ENCODE measurements at regions of chr7 and their contacts with region 1.

Region 1: DNA sequence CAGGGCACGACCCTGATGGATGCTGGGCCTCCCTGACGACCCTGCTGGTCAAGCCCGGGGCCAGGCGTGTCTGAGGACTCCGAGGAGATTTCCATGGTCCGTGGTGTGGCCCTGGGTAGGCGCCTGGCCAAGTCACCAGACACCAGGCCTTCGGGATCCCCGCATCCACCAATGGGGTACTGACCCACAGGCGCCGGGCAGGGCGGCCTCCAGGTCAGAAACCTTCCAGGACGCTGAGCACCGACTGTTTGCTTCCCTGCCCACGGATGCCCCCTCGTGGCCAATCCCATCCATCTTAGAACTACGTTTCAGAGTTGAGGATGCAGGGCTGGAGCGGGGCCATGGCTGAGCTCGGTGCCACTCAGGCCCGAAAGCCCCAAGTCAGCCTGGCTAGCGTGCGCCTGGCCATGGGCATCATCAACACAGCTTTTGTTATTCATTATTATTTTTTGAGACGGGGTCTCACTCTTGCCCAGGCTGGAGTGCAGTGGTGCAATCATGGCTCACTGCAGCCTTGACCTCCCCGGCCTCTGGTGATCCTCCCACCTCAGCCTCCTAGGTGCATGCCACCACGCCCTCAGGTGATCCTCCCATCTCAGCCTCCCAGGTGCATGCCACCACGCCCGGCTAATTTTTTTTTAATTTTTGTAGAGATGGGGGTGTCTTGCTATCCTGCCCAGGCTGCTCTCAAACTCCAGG is 7.1 kb upstream of the AMZ1 start:
- DNase-seq: peak; percentile 85 to 88
- ATAC-seq: peak; percentile 65 to 92 (median 88)
- H3K4me3 ChIP-seq: no peak overlapping the region
- H3K27ac ChIP-seq: no peak overlapping the region
- H3K4me1 ChIP-seq: peaks cover 0 to 5% (median 3%) of the 10 kb centered on the region in 9 donors
- H3K27me3 ChIP-seq: peaks cover 0 to 37% (median 21%) of the 10 kb centered on the region in 7 donors
- CTCF ChIP-seq: peak; percentile 70 to 85 (median 80)

Region 2: GRCh38 chr7:2403014-2403717 is 277.8 kb before region 1 on chr7 and contains the start of gene CHST12:
- intact Hi-C with region 1: no loop called
- DNase-seq: peak; percentile 94 to 96
- ATAC-seq: peak; percentile 86 to 92 (median 89)
- H3K4me3 ChIP-seq: peak within 1 kb of the TSS; percentile 87 to 100 (median 96)
- H3K27ac ChIP-seq: peak within 1 kb of the TSS; percentile 52 to 91 (median 88)
- H3K4me1 ChIP-seq: peaks cover 6 to 76% (median 58%) of the 10 kb centered on the region in 9 donors
- H3K27me3 ChIP-seq: no peaks in the 10 kb centered on the region
- CTCF ChIP-seq: no peak
- total RNA-seq, gene CHST12: 12.4 to 17.2 (median 14.0) TPM

Region 3: GRCh38 chr7:2444476-2444875 is 236.5 kb before region 1 on chr7:
- intact Hi-C with region 1: loop called in 1 of 10 experiments (anchors 10 kb)
- DNase-seq: peak in 1 of 2 donors; percentile 24
- ATAC-seq: peak in 7 of 8 donors; percentile 46 to 77 (median 50)
- H3K4me3 ChIP-seq: no peak overlapping the region
- H3K27ac ChIP-seq: peak overlapping the region in 6 of 10 donors; percentile 10 to 48 (median 29)
- H3K4me1 ChIP-seq: peaks cover 0 to 13% (median 0%) of the 10 kb centered on the region in 9 donors
- H3K27me3 ChIP-seq: no peaks in the 10 kb centered on the region
- CTCF ChIP-seq: no peak

Region 4: DNA sequence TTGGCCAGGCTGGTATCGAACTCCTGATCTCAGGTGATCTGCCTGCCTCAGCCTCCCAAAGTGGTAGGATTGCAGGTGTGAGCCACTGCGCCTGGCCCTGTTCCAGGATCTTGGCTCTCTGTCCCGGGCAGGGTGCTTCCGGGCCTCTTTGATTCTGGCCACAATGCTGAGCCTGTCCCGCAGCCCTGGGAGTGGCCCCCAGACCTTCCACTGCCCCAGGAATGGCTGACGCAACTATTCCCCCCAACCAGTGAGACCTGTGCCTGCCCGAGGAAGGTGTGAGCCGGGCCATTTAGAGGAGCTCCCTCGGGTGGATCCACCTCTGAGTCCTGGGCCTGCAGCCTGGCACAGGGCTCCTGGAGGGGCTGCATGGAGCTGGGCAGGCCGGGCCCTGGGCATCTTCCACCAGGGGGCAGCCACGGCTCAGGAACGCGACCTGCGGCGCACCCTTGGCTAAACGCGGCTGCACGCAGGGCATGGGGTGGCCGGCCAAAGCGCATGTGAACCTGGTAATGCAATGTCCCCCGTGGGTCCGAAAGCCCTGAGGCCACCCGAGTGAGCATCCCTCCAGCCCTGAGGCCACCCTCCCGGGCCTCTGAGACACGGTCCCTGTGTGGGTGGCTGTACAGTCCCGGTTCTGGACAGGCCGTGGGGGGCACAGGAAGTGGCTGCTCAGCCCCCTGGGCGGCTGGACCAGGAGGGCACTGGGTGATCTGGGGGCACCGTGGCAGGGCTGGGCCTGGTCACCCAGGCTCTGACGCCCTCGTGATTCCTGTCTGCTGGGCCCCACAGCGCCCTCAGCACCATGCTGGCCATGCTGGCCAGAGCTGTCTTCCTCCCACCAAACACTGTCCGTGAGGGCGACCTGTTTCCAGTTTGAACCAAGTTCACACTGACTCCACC is 229.5 kb before region 1 on chr7:
- intact Hi-C with region 1: loop called in 8 of 10 experiments (anchors 2 to 10 kb)
- DNase-seq: peak; percentile 87 to 91
- ATAC-seq: peak; percentile 95 to 98 (median 98)
- H3K4me3 ChIP-seq: peak overlapping the region in 9 of 10 donors; percentile 32 to 58 (median 55)
- H3K27ac ChIP-seq: peak overlapping the region in 5 of 10 donors; percentile 8 to 62 (median 44)
- H3K4me1 ChIP-seq: peaks cover 7 to 15% (median 11%) of the 10 kb centered on the region in 9 donors
- H3K27me3 ChIP-seq: no peaks in the 10 kb centered on the region
- CTCF ChIP-seq: peak; percentile 75 to 95 (median 91)

Region 5: GRCh38 chr7:2465928-2466327 is 215.0 kb before region 1 on chr7:
- intact Hi-C with region 1: loop called in 3 of 10 experiments (anchors 5 to 10 kb)
- DNase-seq: no peak
- ATAC-seq: no peak
- H3K4me3 ChIP-seq: no peak overlapping the region
- H3K27ac ChIP-seq: no peak overlapping the region
- H3K4me1 ChIP-seq: peaks cover 0 to 18% (median 0%) of the 10 kb centered on the region in 9 donors
- H3K27me3 ChIP-seq: peaks cover 0 to 10% (median 0%) of the 10 kb centered on the region in 7 donors
- CTCF ChIP-seq: no peak

Region 6: DNA sequence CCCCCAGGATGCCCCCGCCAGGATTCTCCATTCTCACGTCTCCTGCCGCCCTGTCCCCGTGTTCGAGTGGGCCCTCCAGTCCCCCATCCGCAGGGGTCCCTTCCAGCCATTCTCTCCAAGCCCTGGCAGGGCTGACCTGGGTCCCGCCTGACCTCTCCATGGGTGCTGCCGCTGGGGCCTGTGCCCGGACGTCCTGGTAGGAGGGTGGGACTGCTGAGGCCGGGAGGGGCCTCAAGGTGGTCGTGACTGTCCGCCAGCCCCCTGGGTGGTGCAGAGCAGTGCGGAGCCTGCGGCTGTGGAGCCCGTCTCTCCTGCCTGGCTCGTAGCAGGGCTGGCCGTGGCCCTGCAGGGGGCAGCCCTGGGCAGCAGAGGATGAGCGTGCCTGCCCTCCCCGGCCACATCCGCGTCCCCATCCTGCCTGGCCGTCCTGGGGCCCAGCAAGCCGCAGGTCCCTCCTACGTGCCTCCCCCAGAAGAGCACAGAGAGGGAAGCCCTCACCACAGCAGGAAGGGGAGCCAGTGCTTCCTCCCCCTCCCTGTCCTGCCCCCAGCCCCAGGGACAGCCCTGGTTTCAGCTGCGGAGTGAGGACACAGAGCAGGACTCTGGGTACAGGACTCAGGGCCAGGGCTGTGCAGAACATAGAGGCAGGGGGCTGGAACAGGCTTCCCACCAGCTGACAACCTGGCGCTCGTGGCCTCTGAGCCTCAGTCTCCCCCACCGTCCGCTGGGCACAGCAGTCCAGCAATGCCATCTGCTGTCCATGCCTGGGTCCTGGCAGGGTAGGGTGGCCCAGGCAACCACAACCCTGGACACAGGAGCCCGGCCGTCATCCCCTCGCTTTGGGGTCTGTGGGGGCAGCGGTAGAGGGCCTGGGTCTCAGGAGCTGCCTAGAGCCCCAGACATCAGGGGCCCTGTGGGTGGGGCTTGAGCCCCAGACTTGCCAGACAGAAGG is 203.2 kb before region 1 on chr7:
- intact Hi-C with region 1: loop called in 2 of 10 experiments (anchors 10 kb)
- DNase-seq: peak; percentile 64 to 77
- ATAC-seq: peak; percentile 82 to 90 (median 86)
- H3K4me3 ChIP-seq: peak overlapping the region in 2 of 10 donors; percentile 7 to 15
- H3K27ac ChIP-seq: peak overlapping the region in 4 of 10 donors; percentile 14 to 56 (median 26)
- H3K4me1 ChIP-seq: peaks cover 14 to 37% (median 29%) of the 10 kb centered on the region in 9 donors
- H3K27me3 ChIP-seq: peaks cover 0 to 21% (median 8%) of the 10 kb centered on the region in 7 donors
- CTCF ChIP-seq: peak; percentile 60 to 89 (median 77)

Region 7: DNA sequence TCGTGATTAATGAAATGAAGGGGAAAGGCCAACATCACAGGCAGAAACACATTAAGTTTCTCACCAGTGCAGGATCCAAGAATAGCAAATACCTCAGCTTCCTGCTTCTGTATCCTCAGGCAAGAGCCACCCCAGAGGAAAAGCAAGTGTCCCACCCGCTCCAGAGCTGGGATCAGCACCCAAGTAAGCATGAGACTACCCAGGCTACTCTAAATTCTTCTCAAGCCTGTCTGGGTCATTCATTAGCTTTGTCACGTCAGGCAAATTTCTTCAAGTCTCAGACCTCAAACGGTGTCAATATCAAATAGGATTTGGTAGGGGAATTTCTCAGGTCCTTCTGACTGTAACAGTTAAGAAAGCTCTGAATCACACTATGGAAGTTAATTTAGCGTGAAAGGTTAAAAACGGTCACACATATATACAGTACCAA is 104.1 kb after region 1 on chr7:
- intact Hi-C with region 1: no loop called
- DNase-seq: peak in 1 of 2 donors; percentile 62
- ATAC-seq: peak in 7 of 8 donors; percentile 70 to 92 (median 83)
- H3K4me3 ChIP-seq: no peak overlapping the region
- H3K27ac ChIP-seq: peak overlapping the region in 8 of 10 donors; percentile 36 to 83 (median 60)
- H3K4me1 ChIP-seq: peaks cover 0 to 40% (median 25%) of the 10 kb centered on the region in 9 donors
- H3K27me3 ChIP-seq: no peaks in the 10 kb centered on the region
- CTCF ChIP-seq: no peak

Measured in heart right ventricle (tissue), 16 donors.